Left cardiac atrium (tissue), 4 donors: ENCODE measurements at regions of chr2 and their contacts with region 1.

Region 1: GRCh38 chr2:158903711-158904443 is 64.6 kb upstream of the TANC1 start:
- DNase-seq: no peak
- ATAC-seq: no peak

Region 2: DNA sequence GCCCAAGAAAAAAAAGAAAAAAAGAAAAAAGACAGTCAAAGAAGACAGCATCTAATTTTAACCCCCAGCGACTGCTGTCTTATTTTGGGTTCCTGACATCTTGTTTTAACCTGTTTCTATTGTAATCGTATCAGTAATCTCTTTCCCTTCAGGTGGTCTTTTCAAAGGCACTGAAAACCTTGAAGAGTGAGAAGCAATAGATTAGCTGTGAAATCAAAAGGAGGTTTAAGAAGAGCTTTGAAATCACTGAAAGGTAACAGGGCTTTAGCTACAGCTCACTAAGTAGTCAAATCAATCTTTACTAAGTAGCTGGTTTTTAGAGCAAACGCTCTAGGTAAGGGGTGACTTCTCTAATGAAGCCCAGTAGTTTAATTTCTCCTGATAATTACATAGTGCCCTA is 59.2 kb after region 1 on chr2:
- intact Hi-C with region 1: loop called (anchors 5 to 10 kb)
- DNase-seq: no peak
- ATAC-seq: no peak

Region 3: GRCh38 chr2:158968396-158969161 is 64.7 kb after region 1 on chr2 and contains the start of gene TANC1:
- intact Hi-C with region 1: loop called (anchors 5 to 10 kb)
- DNase-seq: peak; percentile 96
- ATAC-seq: peak; percentile 96 to 97
- total RNA-seq, gene TANC1: 38.6 to 80.7 TPM

Region 4: GRCh38 chr2:158984604-158985135 is 80.8 kb after region 1 on chr2:
- intact Hi-C with region 1: no loop called
- DNase-seq: peak; percentile 46
- ATAC-seq: peak; percentile 90 to 92

Region 5: DNA sequence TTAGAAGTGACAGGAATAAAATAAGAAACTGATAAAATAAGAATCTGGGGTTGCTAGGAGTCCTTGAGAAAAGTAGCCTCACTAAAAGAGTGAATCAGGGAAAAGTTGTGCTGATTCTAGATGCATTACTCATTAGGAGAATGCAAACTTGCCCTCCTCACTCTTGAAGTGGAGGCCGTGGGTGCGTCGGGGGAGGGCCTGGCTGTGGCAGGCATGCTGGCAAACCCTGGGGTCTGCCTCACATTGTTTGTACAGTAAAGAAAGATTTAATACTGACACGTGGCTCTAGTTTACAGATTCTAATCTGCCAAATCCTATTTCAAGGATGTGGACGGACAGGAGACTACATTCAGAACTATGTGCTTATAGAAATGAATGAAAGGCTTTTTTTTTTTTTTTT is 106.5 kb after region 1 on chr2:
- intact Hi-C with region 1: loop called in 1 of 2 experiments (anchors 10 kb)
- DNase-seq: no peak
- ATAC-seq: peak in 1 of 2 donors; percentile 82

Region 6: GRCh38 chr2:159118115-159118858 is 214.4 kb after region 1 on chr2:
- intact Hi-C with region 1: loop called (anchors 1 to 5 kb)
- DNase-seq: peak; percentile 89
- ATAC-seq: peak; percentile 88 to 90